Mammary epithelial cell (primary cell): ENCODE measurements at regions of chr7 and their contacts with region 1.

Region 1: GRCh38 chr7:143305423-143306070 is 10.4 kb upstream of the CLCN1 start:
- DNase-seq: peak; percentile 41
- H3K4me3 ChIP-seq: no peak overlapping the region
- H3K27ac ChIP-seq: no peak overlapping the region
- H3K4me1 ChIP-seq: peaks cover 8% of the 10 kb centered on the region
- H3K27me3 ChIP-seq: no peaks in the 10 kb centered on the region
- CTCF ChIP-seq: peak; percentile 76 to 80

Region 2: DNA sequence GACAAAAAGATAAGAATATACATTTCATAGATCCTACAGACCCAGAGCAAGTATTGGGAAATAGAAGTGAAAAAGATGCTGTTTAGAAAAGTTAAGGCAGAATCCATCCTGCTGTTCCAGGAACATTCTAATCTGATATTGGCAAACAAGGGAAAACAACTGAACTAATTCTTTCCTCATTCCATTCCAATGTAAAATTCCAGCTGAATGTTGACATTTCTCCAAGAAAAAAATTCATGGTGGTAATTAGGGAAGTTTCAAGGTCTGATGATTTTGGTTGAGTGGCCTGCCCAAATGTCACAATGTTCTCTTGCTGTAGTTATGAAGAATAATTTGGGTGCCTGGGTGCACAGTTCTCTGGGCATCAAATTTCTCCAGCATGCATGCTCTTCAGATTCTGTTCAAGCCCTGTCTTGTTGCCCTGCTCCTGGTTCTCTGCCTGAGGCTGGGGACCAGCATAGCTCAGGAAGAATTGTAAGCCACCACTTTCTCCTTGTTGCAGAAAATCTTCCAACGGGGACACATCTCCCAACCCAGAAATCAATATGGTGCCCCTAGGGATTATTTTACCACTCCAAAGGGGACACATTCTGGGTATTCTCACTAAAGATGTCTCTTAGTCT is 158.4 kb before region 1 on chr7:
- CTCF ChIA-PET with region 1: no interaction called
- dilution Hi-C with region 1: no loop called
- in situ Hi-C with region 1: no loop called
- intact Hi-C with region 1: no loop called
- DNase-seq: no peak
- H3K4me3 ChIP-seq: no peak overlapping the region
- H3K27ac ChIP-seq: no peak overlapping the region
- H3K4me1 ChIP-seq: no peaks in the 10 kb centered on the region
- H3K27me3 ChIP-seq: no peaks in the 10 kb centered on the region
- CTCF ChIP-seq: no peak

Region 3: GRCh38 chr7:143263266-143264195 is 42.0 kb before region 1 on chr7 and contains the start of gene GSTK1:
- CTCF ChIA-PET with region 1: no interaction called
- dilution Hi-C with region 1: no loop called
- in situ Hi-C with region 1: no loop called
- intact Hi-C with region 1: loop called (anchors 1 kb)
- DNase-seq: peak; percentile 61
- H3K4me3 ChIP-seq: peak within 1 kb of the TSS; percentile 76 to 99 (median 97)
- H3K27ac ChIP-seq: peak within 1 kb of the TSS; percentile 48
- H3K4me1 ChIP-seq: peaks cover 27% of the 10 kb centered on the region
- H3K27me3 ChIP-seq: no peaks in the 10 kb centered on the region
- CTCF ChIP-seq: no peak
- total RNA-seq, gene GSTK1: 111 to 118 TPM